MCF 10A (cell line): ENCODE measurements at regions of chr20 and their contacts with region 1.

Region 1: DNA sequence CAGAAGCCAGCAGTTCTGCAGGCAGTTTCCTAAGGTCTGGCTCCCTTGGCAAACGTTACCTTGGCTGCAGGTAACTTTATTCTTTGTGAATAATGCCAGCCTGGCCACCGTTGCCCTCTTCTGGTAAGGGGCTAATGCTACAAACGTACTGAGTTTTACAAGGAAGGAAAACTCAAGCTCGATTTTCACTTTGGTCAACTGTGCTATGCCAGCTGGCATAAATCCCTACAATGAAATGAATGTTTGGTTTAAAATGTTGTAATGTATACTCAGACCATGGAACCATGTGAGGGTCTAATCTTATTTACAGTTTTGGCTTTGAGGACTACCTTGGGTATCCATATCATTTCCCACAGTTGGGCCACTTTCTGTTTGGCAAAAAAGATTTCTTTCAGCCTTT is 101.4 kb downstream of the SLX4IP start:
- DNase-seq: peak; percentile 71
- H3K4me3 Mint-ChIP-seq: no peak overlapping the region
- H3K27ac Mint-ChIP-seq: no peak overlapping the region
- H3K4me1 Mint-ChIP-seq: peaks cover 31% of the 10 kb centered on the region
- H3K27me3 Mint-ChIP-seq: no peaks in the 10 kb centered on the region
- CTCF ChIP-seq: peak; percentile 44

Region 2: GRCh38 chr20:10125757-10126156 is 410.8 kb before region 1 on chr20:
- CTCF ChIA-PET with region 1: no interaction called
- POLR2A ChIA-PET with region 1: no interaction called
- intact Hi-C with region 1: no loop called
- DNase-seq: no peak
- H3K4me3 Mint-ChIP-seq: no peak overlapping the region
- H3K27ac Mint-ChIP-seq: no peak overlapping the region
- H3K4me1 Mint-ChIP-seq: no peaks in the 10 kb centered on the region
- H3K27me3 Mint-ChIP-seq: peaks cover 25% of the 10 kb centered on the region
- CTCF ChIP-seq: no peak

Region 3: GRCh38 chr20:10271494-10272219 is 264.9 kb before region 1 on chr20:
- CTCF ChIA-PET with region 1: no interaction called
- POLR2A ChIA-PET with region 1: no interaction called
- intact Hi-C with region 1: no loop called
- DNase-seq: no peak
- H3K4me3 Mint-ChIP-seq: no peak overlapping the region
- H3K27ac Mint-ChIP-seq: no peak overlapping the region
- H3K4me1 Mint-ChIP-seq: no peaks in the 10 kb centered on the region
- H3K27me3 Mint-ChIP-seq: peaks cover 11% of the 10 kb centered on the region
- CTCF ChIP-seq: no peak

Region 4: DNA sequence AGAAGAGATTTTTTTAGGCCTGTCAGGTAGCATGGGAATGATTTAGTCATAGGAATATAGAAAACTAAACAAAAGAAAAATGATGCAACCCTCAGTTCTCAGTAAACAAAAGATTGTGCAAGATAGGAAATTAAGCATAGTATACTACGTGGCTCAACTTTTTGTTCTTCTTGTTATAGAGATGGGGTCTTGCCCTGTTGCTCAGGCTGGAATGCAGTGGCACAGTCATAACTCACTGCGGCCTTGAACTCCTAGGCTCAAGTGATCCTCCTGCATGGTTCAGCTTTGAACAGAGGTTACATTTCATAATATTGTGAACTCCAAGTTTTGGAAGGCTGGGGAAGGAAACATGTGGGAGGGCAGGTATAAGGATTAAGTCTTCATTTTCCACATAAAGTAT is 72.9 kb before region 1 on chr20:
- CTCF ChIA-PET with region 1: interaction called, 22 read pairs
- POLR2A ChIA-PET with region 1: interaction called, 4 read pairs
- intact Hi-C with region 1: no loop called
- DNase-seq: peak; percentile 39
- H3K4me3 Mint-ChIP-seq: no peak overlapping the region
- H3K27ac Mint-ChIP-seq: no peak overlapping the region
- H3K4me1 Mint-ChIP-seq: peaks cover 7% of the 10 kb centered on the region
- H3K27me3 Mint-ChIP-seq: no peaks in the 10 kb centered on the region
- CTCF ChIP-seq: no peak

Region 5: GRCh38 chr20:10476319-10476724 is 60.2 kb before region 1 on chr20:
- CTCF ChIA-PET with region 1: interaction called, 48 read pairs
- POLR2A ChIA-PET with region 1: interaction called, 7 read pairs
- intact Hi-C with region 1: no loop called
- DNase-seq: no peak
- H3K4me3 Mint-ChIP-seq: no peak overlapping the region
- H3K27ac Mint-ChIP-seq: no peak overlapping the region
- H3K4me1 Mint-ChIP-seq: no peaks in the 10 kb centered on the region
- H3K27me3 Mint-ChIP-seq: no peaks in the 10 kb centered on the region
- CTCF ChIP-seq: no peak

Region 6: DNA sequence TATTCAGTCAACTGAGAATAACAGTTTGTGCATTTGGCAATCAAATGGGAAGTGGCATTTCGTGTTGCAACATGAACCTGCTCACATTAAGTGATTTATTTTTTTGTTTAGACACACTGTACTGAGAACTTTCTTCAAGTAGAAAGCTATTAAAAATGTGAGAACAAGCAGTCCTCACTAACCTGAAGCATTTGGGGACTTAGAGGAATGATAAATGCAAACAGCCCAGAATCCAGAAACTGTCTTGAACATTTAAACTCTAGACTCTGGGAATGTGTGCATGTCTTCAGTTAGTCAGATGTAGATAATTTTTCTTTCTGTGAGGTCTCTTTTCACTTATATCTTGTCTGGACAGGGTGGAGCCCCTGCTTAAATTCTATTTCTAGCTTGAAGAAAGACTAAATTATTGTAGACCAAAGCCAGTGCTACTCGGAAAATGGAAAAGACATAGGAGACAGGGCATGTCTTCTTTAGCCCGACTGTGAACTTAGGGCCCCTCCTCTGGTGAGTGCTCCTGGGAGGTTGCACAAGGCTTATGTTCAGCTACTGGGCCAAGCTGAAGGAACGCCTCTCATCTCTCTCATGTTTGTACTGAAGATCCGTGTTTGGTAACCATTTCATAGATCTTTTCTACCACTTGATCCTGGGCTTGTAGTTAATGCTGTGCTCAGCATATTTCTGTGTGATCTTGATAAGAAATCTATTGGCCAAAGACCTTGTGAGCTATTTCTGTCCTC is 31.4 kb before region 1 on chr20:
- CTCF ChIA-PET with region 1: interaction called, 8 read pairs
- POLR2A ChIA-PET with region 1: interaction called, 21 read pairs
- intact Hi-C with region 1: no loop called
- DNase-seq: peak; percentile 74
- H3K4me3 Mint-ChIP-seq: peak overlapping the region; percentile 52
- H3K27ac Mint-ChIP-seq: peak overlapping the region; percentile 89
- H3K4me1 Mint-ChIP-seq: peaks cover 67% of the 10 kb centered on the region
- H3K27me3 Mint-ChIP-seq: no peaks in the 10 kb centered on the region
- CTCF ChIP-seq: no peak

Region 7: GRCh38 chr20:10521068-10521831 is 15.3 kb before region 1 on chr20:
- CTCF ChIA-PET with region 1: interaction called, 36 read pairs
- POLR2A ChIA-PET with region 1: interaction called, 26 read pairs
- intact Hi-C with region 1: no loop called
- DNase-seq: peak; percentile 86
- H3K4me3 Mint-ChIP-seq: peak overlapping the region; percentile 24
- H3K27ac Mint-ChIP-seq: peak overlapping the region; percentile 83
- H3K4me1 Mint-ChIP-seq: peaks cover 61% of the 10 kb centered on the region
- H3K27me3 Mint-ChIP-seq: no peaks in the 10 kb centered on the region
- CTCF ChIP-seq: no peak